ENCODE measurements at regions of chr5 and their contacts with region 1.

Region 1: GRCh38 chr5:77630258-77631089 is 8.0 kb downstream of the OTP start:
- DNase-seq: peak; percentile 79
- H3K4me3 Mint-ChIP-seq: peak overlapping the region; percentile 78
- H3K27ac Mint-ChIP-seq: peak overlapping the region; percentile 34
- H3K4me1 Mint-ChIP-seq: peaks cover 14% of the 10 kb centered on the region
- H3K27me3 Mint-ChIP-seq: peaks cover 70% of the 10 kb centered on the region

Region 2: DNA sequence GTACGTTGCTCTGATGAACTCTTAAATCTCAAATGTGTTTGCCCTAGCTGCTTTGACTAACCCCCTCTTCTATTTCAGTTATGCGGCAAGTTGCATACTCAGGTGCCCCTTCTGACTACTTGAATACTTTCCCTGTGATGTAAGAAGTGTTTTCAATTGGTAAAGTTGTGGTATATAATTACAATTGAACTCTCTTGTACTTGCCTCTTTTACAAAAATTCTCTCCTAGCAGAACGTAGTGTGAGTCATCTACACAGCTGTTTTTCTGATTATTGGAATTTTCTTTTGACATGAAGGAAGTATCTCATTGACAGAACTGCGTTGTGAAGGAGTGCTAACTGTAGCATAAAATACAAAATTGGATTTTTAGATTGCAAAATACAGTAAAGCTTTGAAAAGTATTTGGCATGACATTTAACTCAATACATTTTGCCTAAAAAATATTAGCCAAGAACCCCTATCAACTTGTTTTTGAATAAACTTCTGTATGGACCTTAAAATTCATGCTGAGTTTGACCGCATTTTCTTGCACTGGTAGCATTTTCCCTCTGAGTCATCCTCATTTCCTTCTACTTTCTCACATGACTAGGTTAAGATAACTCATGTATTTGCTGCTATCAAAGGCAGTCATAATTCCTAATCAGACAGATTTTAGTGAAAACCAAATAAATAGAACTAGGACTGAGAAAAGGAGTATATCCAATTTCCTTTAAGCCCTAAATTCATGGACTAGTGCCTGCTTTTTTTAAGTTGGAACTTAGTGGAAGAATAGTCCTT is 671.3 kb before region 1 on chr5:
- intact Hi-C with region 1: loop called (anchors 10 kb)
- DNase-seq: no peak
- H3K4me3 Mint-ChIP-seq: no peak overlapping the region
- H3K27ac Mint-ChIP-seq: no peak overlapping the region
- H3K4me1 Mint-ChIP-seq: peaks cover 18% of the 10 kb centered on the region
- H3K27me3 Mint-ChIP-seq: peaks cover 52% of the 10 kb centered on the region

Region 3: GRCh38 chr5:77104813-77105212 is 525.7 kb before region 1 on chr5:
- intact Hi-C with region 1: no loop called
- DNase-seq: no peak
- H3K4me3 Mint-ChIP-seq: no peak overlapping the region
- H3K27ac Mint-ChIP-seq: no peak overlapping the region
- H3K4me1 Mint-ChIP-seq: peaks cover 2% of the 10 kb centered on the region
- H3K27me3 Mint-ChIP-seq: peaks cover 2% of the 10 kb centered on the region

Region 4: GRCh38 chr5:77143998-77144836 is 486.3 kb before region 1 on chr5:
- intact Hi-C with region 1: loop called (anchors 10 kb)
- DNase-seq: peak; percentile 86
- H3K4me3 Mint-ChIP-seq: no peak overlapping the region
- H3K27ac Mint-ChIP-seq: no peak overlapping the region
- H3K4me1 Mint-ChIP-seq: peaks cover 12% of the 10 kb centered on the region
- H3K27me3 Mint-ChIP-seq: peaks cover 14% of the 10 kb centered on the region

Region 5: DNA sequence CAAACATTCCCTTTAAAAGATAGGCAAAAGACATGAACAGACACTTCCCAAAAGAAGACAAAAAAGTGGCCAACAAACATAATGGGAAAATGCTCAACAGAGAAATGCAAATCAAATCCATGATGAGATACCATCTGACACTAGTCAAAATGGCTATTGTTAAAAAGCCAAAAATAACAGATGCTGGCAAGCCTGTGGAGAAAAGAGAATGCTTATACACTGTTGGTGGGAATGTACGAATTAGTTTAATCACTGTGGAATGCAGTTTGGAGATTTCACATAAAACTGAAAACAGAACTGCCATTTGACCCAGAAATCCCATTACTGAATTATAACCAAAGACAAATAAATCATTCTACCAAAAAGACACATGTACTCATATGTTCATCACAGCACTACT is 80.1 kb before region 1 on chr5:
- intact Hi-C with region 1: no loop called
- DNase-seq: no peak
- H3K4me3 Mint-ChIP-seq: no peak overlapping the region
- H3K27ac Mint-ChIP-seq: no peak overlapping the region
- H3K4me1 Mint-ChIP-seq: no peaks in the 10 kb centered on the region
- H3K27me3 Mint-ChIP-seq: peaks cover 9% of the 10 kb centered on the region

Region 6: GRCh38 chr5:77663090-77663863 is 32.8 kb after region 1 on chr5:
- intact Hi-C with region 1: no loop called
- DNase-seq: no peak
- H3K4me3 Mint-ChIP-seq: no peak overlapping the region
- H3K27ac Mint-ChIP-seq: no peak overlapping the region
- H3K4me1 Mint-ChIP-seq: peaks cover 1% of the 10 kb centered on the region
- H3K27me3 Mint-ChIP-seq: peaks cover 8% of the 10 kb centered on the region

Measured in activated CD4-positive, alpha-beta T cell treated with anti-CD3 and anti-CD28 coated beads, Interleukin-2, amount 10 ng/mL, durations not matched to agents 24 days and 14 days (primary cell).